Dendritic cell treated with granulocyte-macrophage colony-stimulating factor and Interleukin-4, amounts not matched to agents 40 ng/mL and 50 ng/mL, for 4 days (primary cell): ENCODE measurements at regions of chr17 and their contacts with region 1.

Region 1: GRCh38 chr17:1229432-1229899 is 40.8 kb upstream of the BHLHA9 start:
- H3K4me3 Mint-ChIP-seq: peak overlapping the region; percentile 96
- H3K27ac Mint-ChIP-seq: peak overlapping the region; percentile 97
- H3K4me1 Mint-ChIP-seq: peaks cover 76% of the 10 kb centered on the region
- H3K27me3 Mint-ChIP-seq: no peaks in the 10 kb centered on the region

Region 2: GRCh38 chr17:1098387-1098786 is 131.1 kb before region 1 on chr17:
- intact Hi-C with region 1: no loop called
- H3K4me3 Mint-ChIP-seq: peak overlapping the region; percentile 59
- H3K27ac Mint-ChIP-seq: peak overlapping the region; percentile 93
- H3K4me1 Mint-ChIP-seq: peaks cover 90% of the 10 kb centered on the region
- H3K27me3 Mint-ChIP-seq: no peaks in the 10 kb centered on the region

Region 3: DNA sequence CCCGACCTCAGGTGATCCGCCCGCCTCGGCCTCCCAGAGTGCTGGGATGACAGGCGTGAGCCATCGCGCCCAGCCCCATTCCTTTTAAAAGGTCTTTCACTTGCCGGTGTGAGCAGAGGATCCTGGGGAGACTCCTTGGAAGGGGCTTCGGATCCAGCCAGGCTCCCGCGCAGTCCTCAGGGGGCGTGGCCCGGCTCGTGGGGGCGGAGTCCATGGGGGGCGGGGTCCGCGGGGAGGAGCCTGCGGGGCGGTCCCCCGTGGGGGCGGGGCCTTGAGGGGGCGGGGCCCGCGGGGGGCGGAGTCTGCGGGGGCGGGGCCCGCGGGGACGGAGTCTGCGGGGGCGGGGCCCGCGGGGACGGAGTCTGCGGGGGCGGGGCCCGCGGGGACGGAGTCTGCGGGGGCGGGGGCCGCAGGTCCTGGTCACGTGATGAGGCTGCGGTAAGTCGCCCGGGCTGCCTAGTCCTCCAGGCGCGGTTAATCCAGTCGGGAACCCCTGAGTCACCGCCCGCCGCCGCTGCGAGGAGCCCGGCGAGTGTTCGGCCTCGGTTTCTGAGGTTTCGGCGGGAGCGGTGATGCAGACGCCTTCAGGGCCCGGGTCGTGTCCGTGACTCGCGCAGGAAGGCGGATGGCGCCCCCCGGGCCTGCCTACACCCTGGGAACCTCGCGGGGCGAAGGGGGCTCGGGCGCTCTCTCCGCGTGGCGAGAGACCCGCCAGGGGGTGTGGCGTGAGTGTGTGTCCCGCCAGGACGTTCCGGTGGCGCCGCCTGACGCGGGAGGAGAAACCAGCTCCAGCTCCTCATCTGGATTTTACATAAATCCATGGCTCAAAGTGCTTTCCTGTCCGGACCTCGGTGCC is 26.1 kb before region 1 on chr17:
- intact Hi-C with region 1: loop called (anchors 1 kb)
- H3K4me3 Mint-ChIP-seq: peak overlapping the region; percentile 62
- H3K27ac Mint-ChIP-seq: peak overlapping the region; percentile 62
- H3K4me1 Mint-ChIP-seq: peaks cover 76% of the 10 kb centered on the region
- H3K27me3 Mint-ChIP-seq: no peaks in the 10 kb centered on the region

Region 4: DNA sequence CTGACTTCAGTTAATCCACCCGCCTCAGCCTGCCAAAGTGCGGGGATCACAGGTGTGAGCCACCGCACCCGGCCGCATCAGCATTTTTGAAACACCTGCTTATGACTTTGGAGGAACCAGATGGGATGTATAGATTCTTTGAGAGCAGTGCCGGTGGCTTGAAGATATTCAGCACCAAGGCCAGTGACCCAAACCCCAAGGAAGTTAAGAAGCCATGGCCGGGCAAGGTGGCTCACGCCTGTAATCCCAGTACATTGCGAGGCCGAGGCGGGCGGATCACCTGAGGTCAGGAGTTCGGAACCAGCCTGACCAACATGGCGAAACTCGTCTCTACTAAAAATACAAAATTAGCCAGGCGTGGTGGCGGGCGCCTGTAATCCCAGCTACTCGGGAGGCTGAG is 93.9 kb after region 1 on chr17:
- intact Hi-C with region 1: no loop called
- H3K4me3 Mint-ChIP-seq: no peak overlapping the region
- H3K27ac Mint-ChIP-seq: no peak overlapping the region
- H3K4me1 Mint-ChIP-seq: no peaks in the 10 kb centered on the region
- H3K27me3 Mint-ChIP-seq: peaks cover 46% of the 10 kb centered on the region